Activated naive CD4-positive, alpha-beta T cell treated with anti-CD3 and anti-CD28 coated beads for 36 hours (primary cell): ENCODE measurements at regions of chr17 and their contacts with region 1.

Region 1: GRCh38 chr17:50055426-50056230 is at the start of gene ITGA3:
- DNase-seq: peak; percentile 85
- H3K4me3 Mint-ChIP-seq: peak within 1 kb of the TSS; percentile 87
- H3K27ac Mint-ChIP-seq: peak within 1 kb of the TSS; percentile 81
- H3K4me1 Mint-ChIP-seq: peaks cover 38% of the 10 kb centered on the region
- H3K27me3 Mint-ChIP-seq: no peaks in the 10 kb centered on the region
- total RNA-seq, gene ITGA3: 17.9 to 19.3 TPM

Region 2: DNA sequence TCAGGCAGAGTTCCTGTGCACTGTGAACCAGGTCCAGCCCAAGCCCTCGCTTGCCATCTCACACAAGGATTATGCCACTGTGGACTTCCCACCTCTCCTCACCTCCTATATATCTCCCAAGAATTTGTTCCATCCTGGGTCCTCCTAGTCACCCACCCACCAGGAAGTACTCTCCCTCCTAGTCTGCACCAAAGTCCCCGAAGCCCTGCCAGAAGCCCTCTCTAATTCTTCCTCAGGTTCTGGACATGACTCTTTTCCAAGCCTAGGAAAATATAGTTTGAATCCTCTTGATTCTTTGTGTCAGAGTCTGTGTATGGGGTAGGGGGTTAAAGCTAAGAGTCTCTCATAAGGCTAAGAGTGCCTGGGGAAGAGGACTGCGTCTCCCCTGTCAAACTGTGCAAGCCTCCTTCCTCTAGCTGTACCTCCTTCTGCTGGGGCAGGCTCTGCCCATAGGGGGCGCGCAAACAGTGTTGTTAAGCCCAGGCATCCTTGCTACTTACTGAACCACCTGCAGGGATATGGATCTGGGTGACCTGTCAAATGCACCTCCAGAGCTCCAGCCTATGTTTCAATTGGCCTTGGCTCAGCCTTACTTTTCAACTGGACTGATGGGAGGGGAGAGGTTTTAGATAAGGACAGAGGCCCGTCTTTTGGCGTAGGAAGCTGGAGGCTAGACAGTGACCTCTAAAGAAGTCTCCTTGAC is 103.3 kb before region 1 on chr17:
- CTCF ChIA-PET with region 1: no interaction called
- intact Hi-C with region 1: no loop called
- DNase-seq: peak; percentile 93
- H3K4me3 Mint-ChIP-seq: no peak overlapping the region
- H3K27ac Mint-ChIP-seq: no peak overlapping the region
- H3K4me1 Mint-ChIP-seq: no peaks in the 10 kb centered on the region
- H3K27me3 Mint-ChIP-seq: peaks cover 24% of the 10 kb centered on the region

Region 3: GRCh38 chr17:50015146-50015545 is 40.5 kb before region 1 on chr17:
- CTCF ChIA-PET with region 1: no interaction called
- intact Hi-C with region 1: no loop called
- DNase-seq: no peak
- H3K4me3 Mint-ChIP-seq: no peak overlapping the region
- H3K27ac Mint-ChIP-seq: no peak overlapping the region
- H3K4me1 Mint-ChIP-seq: no peaks in the 10 kb centered on the region
- H3K27me3 Mint-ChIP-seq: peaks cover 7% of the 10 kb centered on the region

Region 4: DNA sequence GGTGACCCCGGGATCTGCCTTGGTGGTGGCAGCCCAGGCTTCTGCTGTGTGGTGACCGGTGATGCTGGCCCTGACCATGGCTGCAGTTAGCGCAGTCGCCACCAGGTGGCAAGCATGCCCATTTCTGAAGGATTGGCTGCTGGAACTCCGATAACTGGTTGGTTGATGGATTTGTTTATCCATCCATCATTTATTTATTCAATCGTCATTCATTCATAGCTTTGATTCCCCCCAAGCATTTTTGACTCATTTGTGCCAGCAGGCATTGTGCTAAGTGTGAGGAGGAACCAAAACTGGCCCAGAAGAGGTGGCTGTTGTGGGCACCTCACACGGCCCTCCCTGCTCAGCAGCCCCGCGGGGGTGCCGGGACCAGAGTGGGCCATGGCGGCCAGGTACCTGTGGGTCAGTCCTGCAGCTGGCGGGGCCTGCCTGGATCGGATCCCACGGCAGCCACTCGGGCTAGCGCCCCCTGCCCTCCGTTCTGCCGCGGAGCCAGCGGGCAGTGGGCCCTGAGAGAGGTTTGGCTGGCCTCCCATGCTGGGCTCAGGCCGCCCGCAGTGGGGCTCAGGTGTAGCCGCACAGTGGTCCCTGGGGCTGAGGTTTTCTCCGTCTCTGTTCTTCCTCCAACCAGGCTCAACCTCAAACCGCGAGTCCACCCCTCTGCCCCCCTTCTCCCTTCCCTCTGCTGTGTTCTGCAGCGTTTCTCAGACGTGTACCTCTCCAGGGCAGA is 28.6 kb before region 1 on chr17:
- CTCF ChIA-PET with region 1: interaction called, 47 read pairs
- intact Hi-C with region 1: loop called (anchors 1 kb)
- DNase-seq: peak; percentile 90
- H3K4me3 Mint-ChIP-seq: peak overlapping the region; percentile 68
- H3K27ac Mint-ChIP-seq: no peak overlapping the region
- H3K4me1 Mint-ChIP-seq: peaks cover 18% of the 10 kb centered on the region
- H3K27me3 Mint-ChIP-seq: peaks cover 25% of the 10 kb centered on the region

Region 5: DNA sequence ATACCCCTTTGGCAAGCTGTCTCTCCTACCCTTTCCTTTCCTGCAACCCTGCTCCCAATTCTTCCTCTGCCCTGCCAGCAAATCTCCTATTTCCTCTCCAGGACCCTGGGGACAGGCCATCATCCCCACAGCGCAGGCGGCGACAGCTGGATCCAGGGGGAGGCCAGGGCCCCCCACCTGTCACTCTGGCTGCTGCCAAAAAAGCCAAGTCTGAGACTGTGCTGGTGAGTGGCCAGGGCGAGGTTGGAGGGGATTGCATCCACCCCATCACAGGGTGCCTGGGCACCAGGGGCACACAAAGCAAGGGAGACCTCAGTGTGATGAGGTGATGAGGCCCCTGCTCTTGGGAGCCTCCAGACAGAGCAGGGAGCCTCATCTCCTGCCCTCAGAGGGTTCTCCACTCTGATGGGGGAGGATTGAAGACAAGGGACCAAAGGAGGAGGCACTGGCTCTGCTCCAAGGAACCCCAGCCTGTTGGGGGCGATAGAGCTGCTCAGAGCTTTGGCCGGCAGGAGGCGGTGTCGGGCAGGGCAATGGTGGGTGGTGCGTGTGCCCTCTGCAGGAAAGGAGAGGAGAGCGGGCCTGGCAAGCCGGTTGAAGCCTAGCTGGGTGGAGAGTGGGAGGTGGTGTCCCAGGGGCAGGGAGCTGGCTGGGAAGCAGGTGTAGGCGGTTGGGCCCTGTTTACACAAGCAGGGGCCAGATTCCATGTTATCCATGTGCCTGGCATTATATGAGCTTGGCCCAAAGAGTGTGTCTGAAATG is 23.9 kb after region 1 on chr17:
- CTCF ChIA-PET with region 1: interaction called, 14 read pairs
- intact Hi-C with region 1: no loop called
- DNase-seq: no peak
- H3K4me3 Mint-ChIP-seq: no peak overlapping the region
- H3K27ac Mint-ChIP-seq: no peak overlapping the region
- H3K4me1 Mint-ChIP-seq: no peaks in the 10 kb centered on the region
- H3K27me3 Mint-ChIP-seq: no peaks in the 10 kb centered on the region

Region 6: GRCh38 chr17:50151041-50151936 is 95.7 kb after region 1 on chr17:
- CTCF ChIA-PET with region 1: no interaction called
- intact Hi-C with region 1: loop called (anchors 1 kb)
- DNase-seq: peak; percentile 94
- H3K4me3 Mint-ChIP-seq: peak overlapping the region; percentile 88
- H3K27ac Mint-ChIP-seq: peak overlapping the region; percentile 96
- H3K4me1 Mint-ChIP-seq: peaks cover 44% of the 10 kb centered on the region
- H3K27me3 Mint-ChIP-seq: no peaks in the 10 kb centered on the region

Region 7: GRCh38 chr17:50213026-50214022 is 157.7 kb after region 1 on chr17:
- CTCF ChIA-PET with region 1: no interaction called
- intact Hi-C with region 1: no loop called
- DNase-seq: peak; percentile 89
- H3K4me3 Mint-ChIP-seq: no peak overlapping the region
- H3K27ac Mint-ChIP-seq: peak overlapping the region; percentile 17
- H3K4me1 Mint-ChIP-seq: peaks cover 29% of the 10 kb centered on the region
- H3K27me3 Mint-ChIP-seq: peaks cover 2% of the 10 kb centered on the region

Region 8: DNA sequence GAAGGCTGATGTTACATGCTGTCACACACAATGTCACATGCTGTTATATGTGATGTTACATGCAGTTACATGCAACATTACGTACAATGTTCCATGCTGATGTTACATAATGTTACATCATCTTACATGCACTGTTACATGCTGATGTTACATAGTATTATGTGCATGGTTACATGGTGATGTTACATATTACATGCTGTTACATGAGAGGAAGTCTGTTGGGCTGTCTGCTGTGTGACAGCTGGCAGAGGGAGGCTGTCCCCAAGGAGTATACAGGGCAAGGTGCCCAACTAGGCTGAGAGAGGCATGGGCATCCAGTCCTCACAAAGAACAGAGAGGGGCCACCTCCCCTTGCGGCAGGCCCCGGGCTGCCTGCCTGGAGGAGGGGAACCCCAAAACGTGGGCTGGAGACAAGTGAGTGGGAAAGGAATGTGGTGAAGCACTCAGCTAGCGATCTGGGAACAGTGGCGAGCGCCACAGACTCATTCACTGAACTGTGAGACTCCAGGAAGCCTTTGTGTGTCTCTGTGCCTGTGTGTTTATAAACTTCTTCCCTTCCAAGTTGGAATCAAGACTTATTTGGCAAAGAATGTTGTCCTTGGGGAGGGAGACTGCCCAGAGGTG is 249.3 kb after region 1 on chr17:
- CTCF ChIA-PET with region 1: interaction called, 3 read pairs
- intact Hi-C with region 1: loop called (anchors 5 kb)
- DNase-seq: no peak
- H3K4me3 Mint-ChIP-seq: no peak overlapping the region
- H3K27ac Mint-ChIP-seq: no peak overlapping the region
- H3K4me1 Mint-ChIP-seq: peaks cover 17% of the 10 kb centered on the region
- H3K27me3 Mint-ChIP-seq: peaks cover 4% of the 10 kb centered on the region